ENCODE measurements at regions of chr3 and their contacts with region 1.

Region 1: GRCh38 chr3:179322286-179323196 is at the start of gene ZNF639:
- DNase-seq: peak; percentile 91
- H3K4me3 ChIP-seq: peak within 1 kb of the TSS; percentile 86 to 94 (median 91)
- H3K27ac ChIP-seq: peak within 1 kb of the TSS; percentile 94 to 99 (median 98)
- H3K4me1 ChIP-seq: peaks cover 0 to 44% (median 35%) of the 10 kb centered on the region in 4 donors
- H3K27me3 ChIP-seq: no peaks in the 10 kb centered on the region
- CTCF ChIP-seq: peak; percentile 24 to 87 (median 54)
- EP300 ChIP-seq: no peak
- POLR2A ChIP-seq: no peak
- total RNA-seq, gene ZNF639: 48.7 to 75.9 (median 65.8) TPM

Region 2: DNA sequence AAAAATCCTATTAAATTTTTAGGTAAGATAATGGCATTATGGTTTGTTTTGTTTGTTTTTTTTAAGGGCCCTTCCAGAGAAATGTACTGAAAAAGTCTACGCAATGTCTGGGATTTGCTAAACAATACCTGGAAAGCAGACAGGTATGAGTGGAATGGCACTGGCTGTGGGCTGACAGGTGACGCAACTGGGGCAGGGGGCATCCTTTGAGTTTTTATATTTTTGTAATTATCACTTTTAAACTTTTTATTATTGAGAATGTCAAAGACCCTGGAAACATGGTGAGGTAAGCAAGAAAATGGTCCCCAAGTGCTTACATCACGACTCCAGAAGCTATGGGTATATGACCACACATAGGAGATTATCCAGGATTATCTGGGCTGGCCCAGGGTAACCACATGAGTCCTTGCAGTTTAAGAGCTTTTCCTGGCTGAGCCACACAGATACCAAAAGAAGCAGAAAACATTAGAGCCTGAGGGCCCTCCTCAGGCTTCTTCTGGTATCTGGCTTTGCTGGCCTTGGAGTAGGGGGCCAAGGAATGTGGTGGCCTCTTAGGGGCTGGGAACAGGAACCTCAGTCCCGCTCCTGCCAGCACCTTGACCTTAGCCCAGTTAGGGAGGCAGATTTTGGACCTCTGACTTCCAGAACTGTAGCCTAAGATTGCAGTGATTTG is 527.3 kb before region 1 on chr3:
- intact Hi-C with region 1: no loop called
- DNase-seq: no peak
- H3K4me3 ChIP-seq: no peak overlapping the region
- H3K27ac ChIP-seq: no peak overlapping the region
- H3K4me1 ChIP-seq: no peaks in the 10 kb centered on the region
- H3K27me3 ChIP-seq: no peaks in the 10 kb centered on the region
- CTCF ChIP-seq: no peak
- EP300 ChIP-seq: no peak
- POLR2A ChIP-seq: no peak

Region 3: DNA sequence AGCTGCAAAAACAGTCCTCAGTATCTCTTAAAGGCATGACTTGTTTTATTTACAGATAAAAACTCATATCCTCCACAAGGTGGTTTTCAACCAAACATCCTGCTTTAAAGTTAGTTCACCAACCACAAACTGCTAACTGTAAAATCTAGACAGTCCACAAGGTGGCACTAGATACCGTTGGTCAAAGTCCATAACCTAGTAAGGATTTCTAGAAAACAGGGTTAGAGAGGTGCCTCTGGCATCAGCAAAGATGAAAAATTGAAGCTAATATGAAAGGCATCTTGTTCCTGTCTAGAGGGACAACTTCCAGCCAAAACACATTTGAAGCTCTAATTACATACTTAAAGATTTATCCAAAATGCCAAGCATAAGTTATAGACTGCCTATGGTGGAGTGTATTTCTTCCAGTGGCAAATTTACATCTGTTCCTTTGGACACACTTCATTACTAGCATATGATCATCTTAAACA is 307.0 kb before region 1 on chr3:
- intact Hi-C with region 1: loop called (anchors 2 kb)
- DNase-seq: no peak
- H3K4me3 ChIP-seq: no peak overlapping the region
- H3K27ac ChIP-seq: no peak overlapping the region
- H3K4me1 ChIP-seq: peaks cover 0 to 11% (median 10%) of the 10 kb centered on the region in 4 donors
- H3K27me3 ChIP-seq: no peaks in the 10 kb centered on the region
- CTCF ChIP-seq: peak; percentile 62 to 92 (median 85)
- EP300 ChIP-seq: no peak
- POLR2A ChIP-seq: no peak

Region 4: GRCh38 chr3:179105881-179106280 is 216.7 kb before region 1 on chr3:
- intact Hi-C with region 1: loop called (anchors 2 kb)
- DNase-seq: no peak
- H3K4me3 ChIP-seq: no peak overlapping the region
- H3K27ac ChIP-seq: no peak overlapping the region
- H3K4me1 ChIP-seq: no peaks in the 10 kb centered on the region
- H3K27me3 ChIP-seq: no peaks in the 10 kb centered on the region
- CTCF ChIP-seq: no peak
- EP300 ChIP-seq: no peak
- POLR2A ChIP-seq: no peak

Region 5: DNA sequence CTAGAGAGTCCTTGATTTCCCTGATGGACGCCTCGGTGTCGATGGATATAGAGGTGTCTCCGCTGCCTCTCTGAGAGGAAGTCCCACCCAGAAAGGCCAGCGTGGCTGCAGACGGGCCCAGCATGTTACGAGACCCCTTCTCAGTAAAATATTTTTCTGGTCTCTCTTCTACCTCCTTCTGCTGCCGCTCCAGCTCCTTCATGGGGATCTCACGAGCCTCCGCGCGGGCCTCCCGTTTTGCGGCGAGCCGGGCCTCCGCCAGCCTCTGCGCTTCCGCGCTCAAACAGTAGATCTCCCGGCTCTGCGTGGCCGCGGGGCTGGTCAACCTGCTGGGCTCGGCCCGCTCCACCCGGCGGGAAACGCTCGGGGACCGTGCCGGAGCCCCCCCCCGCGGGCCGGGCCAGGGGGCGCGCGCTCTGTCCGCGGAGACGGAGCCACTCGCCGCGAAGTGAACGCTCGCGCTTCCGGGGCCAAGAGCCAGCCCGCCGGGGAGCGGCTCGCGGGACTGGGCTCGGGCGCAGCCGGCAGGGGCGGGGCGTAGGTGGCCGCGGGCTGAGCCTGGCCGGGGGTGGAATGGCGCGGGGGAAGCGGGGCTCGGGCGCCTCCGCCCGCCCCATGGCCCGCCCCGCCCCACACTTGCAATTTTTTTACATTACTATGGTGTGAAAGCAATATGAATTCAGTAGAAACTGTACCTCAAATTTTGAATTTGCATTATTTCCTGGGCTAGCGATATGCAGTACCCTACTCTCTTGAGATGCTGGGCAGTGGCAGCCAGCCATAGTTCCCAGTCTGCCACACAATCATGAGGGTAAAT is 61.4 kb before region 1 on chr3:
- intact Hi-C with region 1: loop called (anchors 5 kb)
- DNase-seq: peak; percentile 82
- H3K4me3 ChIP-seq: peak overlapping the region; percentile 53 to 71 (median 60)
- H3K27ac ChIP-seq: peak overlapping the region; percentile 58 to 75 (median 68)
- H3K4me1 ChIP-seq: peaks cover 0 to 4% (median 2%) of the 10 kb centered on the region in 4 donors
- H3K27me3 ChIP-seq: no peaks in the 10 kb centered on the region
- CTCF ChIP-seq: no peak
- EP300 ChIP-seq: no peak
- POLR2A ChIP-seq: no peak

Region 6: DNA sequence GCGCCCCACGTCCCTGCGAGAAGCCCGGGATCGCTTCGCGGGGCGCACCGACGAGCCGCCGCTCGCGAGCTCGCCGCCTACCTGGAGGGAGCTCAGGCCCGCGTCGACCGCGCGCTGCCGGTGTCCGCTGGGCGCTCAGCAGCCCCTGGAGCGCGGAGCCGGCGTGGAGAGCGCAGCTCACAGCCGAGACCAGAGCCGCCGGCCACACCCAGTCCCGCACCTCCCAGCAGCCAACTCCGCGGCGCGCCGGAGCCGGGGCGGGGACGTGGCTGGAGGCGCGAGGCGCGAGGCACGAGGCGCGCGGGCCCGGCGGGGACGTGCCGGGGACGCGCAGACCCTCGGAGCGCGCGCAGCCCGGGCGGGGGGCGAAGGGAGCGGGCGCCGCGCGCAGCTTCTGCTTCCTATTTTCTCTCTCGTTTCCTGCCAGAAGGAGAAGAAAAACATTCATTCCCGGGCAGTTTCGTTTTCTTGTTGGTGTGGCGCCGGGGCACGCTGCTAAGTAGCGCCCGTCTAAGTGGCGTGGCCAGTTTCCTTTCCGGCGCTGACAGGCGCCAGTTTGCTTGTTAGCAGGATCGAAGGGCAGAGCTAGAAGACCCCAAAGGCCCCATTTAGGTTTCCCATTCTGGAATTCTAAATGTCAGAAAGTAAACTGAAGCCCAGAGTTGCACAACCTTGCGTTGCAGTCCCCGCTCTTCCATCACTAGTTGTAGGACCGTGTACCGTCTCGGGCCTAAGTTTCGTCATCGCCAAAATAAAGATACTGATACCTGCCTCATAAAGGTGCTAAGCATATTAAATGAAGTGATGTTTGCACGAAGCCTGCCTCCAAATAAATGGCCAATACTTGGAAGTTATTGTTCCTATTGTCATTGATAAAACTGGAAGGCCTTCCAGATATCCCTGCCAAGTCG is 129.0 kb after region 1 on chr3 and contains the start of gene GNB4:
- intact Hi-C with region 1: loop called (anchors 5 kb)
- DNase-seq: peak; percentile 88
- H3K4me3 ChIP-seq: peak within 1 kb of the TSS; percentile 63 to 84 (median 68)
- H3K27ac ChIP-seq: peak within 1 kb of the TSS; percentile 88 to 96 (median 94)
- H3K4me1 ChIP-seq: peaks cover 0 to 35% (median 25%) of the 10 kb centered on the region in 4 donors
- H3K27me3 ChIP-seq: no peaks in the 10 kb centered on the region
- CTCF ChIP-seq: no peak
- EP300 ChIP-seq: no peak
- POLR2A ChIP-seq: no peak
- total RNA-seq, gene GNB4: 32.5 to 44.3 (median 37.4) TPM